ENCODE measurements at regions of chr17 and their contacts with region 1.

Region 1: DNA sequence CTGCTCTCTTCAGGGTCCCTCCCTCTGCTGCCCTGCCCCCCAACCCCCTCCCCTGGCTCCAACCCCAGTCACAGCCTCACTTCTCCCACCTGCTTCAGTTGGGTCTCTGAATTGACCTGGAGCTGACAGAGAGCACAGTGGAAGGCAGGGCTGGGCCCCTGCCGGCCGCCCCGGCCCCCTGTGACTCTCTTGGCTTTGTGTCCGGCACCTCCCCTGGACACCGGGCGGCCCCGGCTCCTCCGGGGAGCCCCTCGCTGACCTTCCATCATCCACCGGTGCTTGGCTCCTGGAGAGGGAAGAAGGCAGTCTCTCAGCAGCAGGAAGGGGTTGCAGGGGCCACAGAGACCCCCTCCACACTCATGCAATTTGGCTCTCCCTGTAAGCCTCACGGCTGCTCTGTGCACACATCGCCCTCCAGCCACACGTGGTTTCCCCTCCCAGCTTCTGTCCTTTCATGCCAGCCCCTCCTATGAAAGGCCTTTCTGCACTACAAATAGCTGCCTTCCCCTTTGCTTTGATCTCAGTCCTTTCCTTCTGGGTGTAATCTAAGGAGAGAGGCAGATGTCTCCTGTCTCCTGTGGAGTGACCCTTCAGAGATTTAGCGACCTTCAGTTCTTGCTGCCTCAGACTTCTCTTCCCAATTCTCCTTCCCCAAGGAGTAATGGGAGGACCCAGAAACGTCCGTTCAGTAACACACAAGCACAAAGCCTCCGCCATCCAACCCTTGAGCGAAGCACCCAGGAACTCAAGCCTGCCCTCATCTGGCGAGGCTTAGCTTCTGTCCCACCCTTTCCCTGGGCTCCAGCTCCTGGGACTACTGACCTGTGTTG is 8.3 kb downstream of the NKIRAS2 start:
- H3K4me3 ChIP-seq: no peak overlapping the region
- H3K27ac ChIP-seq: no peak overlapping the region
- H3K4me1 ChIP-seq: no peaks in the 10 kb centered on the region
- CTCF ChIP-seq: no peak; the same call in 1 of the 2 replicates

Region 2: GRCh38 chr17:41801374-41802271 is 226.6 kb before region 1 on chr17:
- CTCF ChIA-PET with region 1: no interaction called
- POLR2A ChIA-PET with region 1: no interaction called
- H3K4me3 ChIP-seq: peak overlapping the region; percentile 10; the same call in 1 of the 2 replicates
- H3K27ac ChIP-seq: no peak overlapping the region; the same call in 1 of the 2 replicates
- H3K4me1 ChIP-seq: peaks cover 6% of the 10 kb centered on the region
- CTCF ChIP-seq: peak; percentile 93

Region 3: GRCh38 chr17:42039794-42040763 is 11.9 kb after region 1 on chr17:
- CTCF ChIA-PET with region 1: interaction called, 19 read pairs
- POLR2A ChIA-PET with region 1: interaction called, 8 read pairs
- H3K4me3 ChIP-seq: no peak overlapping the region
- H3K27ac ChIP-seq: no peak overlapping the region
- H3K4me1 ChIP-seq: no peaks in the 10 kb centered on the region
- CTCF ChIP-seq: no peak

Region 4: GRCh38 chr17:42050393-42051012 is 22.3 kb after region 1 on chr17 and contains the start of gene C17orf113:
- CTCF ChIA-PET with region 1: interaction called, 17 read pairs
- POLR2A ChIA-PET with region 1: interaction called, 3 read pairs
- H3K4me3 ChIP-seq: peak within 1 kb of the TSS; percentile 50
- H3K27ac ChIP-seq: peak within 1 kb of the TSS; percentile 38; the same call in 1 of the 2 replicates
- H3K4me1 ChIP-seq: no peaks in the 10 kb centered on the region; the same call in 1 of the 2 replicates
- CTCF ChIP-seq: peak; percentile 94

Measured in HEK293 (cell line).